Panc1 (cell line): ENCODE measurements at regions of chr6 and their contacts with region 1.

Region 1: GRCh38 chr6:165439928-165440554 is 130.6 kb upstream of the C6orf118 start:
- DNase-seq: peak; percentile 52
- ATAC-seq: peak; percentile 83
- H3K4me3 ChIP-seq: no peak overlapping the region
- H3K27ac ChIP-seq: no peak overlapping the region
- H3K4me1 ChIP-seq: peaks cover 4% of the 10 kb centered on the region
- H3K27me3 ChIP-seq: no peaks in the 10 kb centered on the region
- CTCF ChIP-seq: peak; percentile 65; the same call in 1 of the 2 replicates

Region 2: DNA sequence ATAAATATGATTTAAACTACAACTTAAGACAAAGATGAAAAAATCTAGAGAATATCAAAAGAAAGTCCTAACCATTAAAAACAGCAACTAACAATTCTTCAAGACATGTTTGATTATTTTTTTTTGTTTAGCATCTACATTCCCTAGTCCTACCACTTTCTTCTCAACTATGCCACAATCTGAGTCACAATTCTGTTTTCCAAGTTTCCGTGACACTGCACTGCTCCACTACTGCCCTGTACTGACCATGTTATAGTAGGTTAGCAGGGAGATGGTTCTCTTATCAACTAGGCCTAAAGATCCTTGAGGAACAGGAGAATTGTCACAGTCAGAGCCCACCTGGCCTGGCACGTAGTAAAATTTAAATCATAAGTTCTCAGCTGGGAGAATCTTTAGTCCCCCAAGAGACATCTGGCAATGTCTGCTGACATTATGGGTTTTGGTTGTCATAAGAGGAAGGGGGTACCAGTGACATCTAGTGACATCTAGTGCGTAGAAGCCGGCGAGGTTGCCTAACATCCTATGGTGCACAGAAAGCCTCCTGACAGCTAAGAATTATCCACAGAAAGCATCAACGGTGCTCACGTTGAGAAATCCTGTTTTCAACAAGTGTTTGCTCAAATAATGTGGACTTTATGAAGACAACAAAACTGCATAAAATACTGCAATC is 122.5 kb after region 1 on chr6:
- CTCF ChIA-PET with region 1: no interaction called
- POLR2A ChIA-PET with region 1: no interaction called
- in situ Hi-C with region 1: no loop called
- intact Hi-C with region 1: no loop called
- DNase-seq: no peak
- ATAC-seq: no peak; the same call in 1 of the 2 replicates
- H3K4me3 ChIP-seq: no peak overlapping the region
- H3K27ac ChIP-seq: peak overlapping the region; percentile 45; the same call in 1 of the 2 replicates
- H3K4me1 ChIP-seq: no peaks in the 10 kb centered on the region; the same call in 1 of the 2 replicates
- H3K27me3 ChIP-seq: no peaks in the 10 kb centered on the region
- CTCF ChIP-seq: peak; percentile 22

Region 3: GRCh38 chr6:165636402-165637048 is 196.5 kb after region 1 on chr6:
- CTCF ChIA-PET with region 1: interaction called, 11 read pairs
- POLR2A ChIA-PET with region 1: no interaction called
- in situ Hi-C with region 1: no loop called
- intact Hi-C with region 1: no loop called
- DNase-seq: no peak
- ATAC-seq: 0 out of 2 replicates have a peak, but pooled peaks have one; percentile 13
- H3K4me3 ChIP-seq: no peak overlapping the region
- H3K27ac ChIP-seq: peak overlapping the region; percentile 59; the same call in 1 of the 2 replicates
- H3K4me1 ChIP-seq: peaks cover 62% of the 10 kb centered on the region
- H3K27me3 ChIP-seq: no peaks in the 10 kb centered on the region
- CTCF ChIP-seq: no peak

Region 4: DNA sequence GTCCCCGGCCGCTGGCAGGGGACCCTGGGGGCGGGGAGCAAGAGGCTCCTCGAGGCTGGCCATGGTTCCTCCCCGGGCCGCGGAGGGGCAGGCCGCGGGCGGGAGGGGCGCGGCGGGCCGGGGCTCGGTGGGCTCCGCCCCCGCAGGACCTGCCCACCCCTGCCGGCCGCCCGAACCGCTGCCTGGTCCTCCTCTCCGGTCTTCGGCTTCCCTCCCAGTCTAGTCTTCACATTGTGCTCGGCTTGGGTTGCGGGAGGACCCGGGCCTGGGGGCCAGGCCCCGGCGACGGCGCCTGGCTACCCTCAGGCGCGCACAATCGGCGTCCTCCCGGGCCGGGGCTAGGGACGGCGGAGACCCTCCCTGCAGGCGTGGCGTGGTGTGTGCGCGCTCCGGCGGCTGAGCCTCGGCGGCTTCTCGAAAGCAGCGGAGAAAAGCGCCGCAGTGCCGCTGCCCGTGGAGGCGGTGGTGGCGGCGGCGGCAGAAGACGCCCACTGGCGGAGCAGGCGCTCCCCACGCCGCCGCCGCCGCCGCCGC is 222.8 kb after region 1 on chr6 and contains the start of gene PDE10A:
- CTCF ChIA-PET with region 1: interaction called, 3 read pairs
- POLR2A ChIA-PET with region 1: interaction called, 8 read pairs
- in situ Hi-C with region 1: no loop called
- intact Hi-C with region 1: loop called (anchors 5 kb)
- DNase-seq: no peak
- ATAC-seq: peak; percentile 77
- H3K4me3 ChIP-seq: peak within 1 kb of the TSS; percentile 75 to 91
- H3K27ac ChIP-seq: peak within 1 kb of the TSS; percentile 90
- H3K4me1 ChIP-seq: peaks cover 31% of the 10 kb centered on the region
- H3K27me3 ChIP-seq: no peaks in the 10 kb centered on the region
- CTCF ChIP-seq: no peak; the same call in 1 of the 2 replicates
- total RNA-seq, gene PDE10A: 27.8 TPM